ENCODE measurements at regions of chr20 and their contacts with region 1.

Region 1: GRCh38 chr20:49610701-49611538 is 43.0 kb upstream of the PTGIS start:
- DNase-seq: peak; percentile 87
- ATAC-seq: peak; percentile 82
- H3K4me3 ChIP-seq: peak overlapping the region; percentile 58 to 84 (median 63)
- H3K27ac ChIP-seq: no peak overlapping the region
- H3K4me1 ChIP-seq: peaks cover 67% of the 10 kb centered on the region
- H3K27me3 ChIP-seq: no peaks in the 10 kb centered on the region; a peak in 1 of 5 replicates
- CTCF ChIP-seq: peak; percentile 100
- EP300 ChIP-seq: peak; percentile 3 to 54; a peak in 1 of 4 replicates
- POLR2A ChIP-seq: no peak
- RAD21 ChIP-seq: peak; percentile 100

Region 2: DNA sequence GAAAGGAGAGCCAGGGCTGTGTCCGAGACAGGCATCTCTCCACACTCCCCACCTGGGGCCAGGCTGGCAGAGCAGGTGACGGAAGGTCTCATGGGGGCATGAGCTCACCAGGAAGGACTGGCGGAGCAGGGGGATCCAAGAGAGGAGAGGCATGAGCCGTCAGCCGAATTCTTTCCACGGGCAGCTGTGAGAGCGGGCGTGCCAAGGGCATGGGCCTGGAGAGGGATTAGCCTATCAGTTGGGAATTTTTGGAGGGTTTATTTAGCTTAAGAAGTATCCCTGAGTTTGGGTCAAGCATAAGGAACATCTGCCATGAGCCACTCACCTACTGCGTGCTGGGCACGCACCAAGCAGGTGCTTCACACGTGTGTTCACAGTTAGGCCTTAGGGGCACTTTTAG is 272.9 kb before region 1 on chr20:
- CTCF ChIA-PET with region 1: interaction called, 14 read pairs
- POLR2A ChIA-PET with region 1: no interaction called
- in situ Hi-C with region 1: loop called (anchors 5 kb)
- intact Hi-C with region 1: loop called (anchors 10 kb)
- DNase-seq: no peak
- ATAC-seq: no peak
- H3K4me3 ChIP-seq: no peak overlapping the region
- H3K27ac ChIP-seq: no peak overlapping the region
- H3K4me1 ChIP-seq: no peaks in the 10 kb centered on the region
- H3K27me3 ChIP-seq: peaks cover 1 to 25% of the 10 kb centered on the region in 2 experiments; a peak in 3 of 5 replicates
- CTCF ChIP-seq: no peak
- EP300 ChIP-seq: no peak
- POLR2A ChIP-seq: no peak
- RAD21 ChIP-seq: no peak

Region 3: GRCh38 chr20:49583669-49584417 is 27.1 kb before region 1 on chr20:
- CTCF ChIA-PET with region 1: interaction called, 15 read pairs
- POLR2A ChIA-PET with region 1: interaction called, 18 read pairs
- in situ Hi-C with region 1: no loop called
- intact Hi-C with region 1: no loop called
- DNase-seq: peak; percentile 97
- ATAC-seq: peak; percentile 95
- H3K4me3 ChIP-seq: peak overlapping the region in 2 of 3 experiments; percentile 29 to 59; a peak in 4 of 6 replicates
- H3K27ac ChIP-seq: peak overlapping the region; percentile 84
- H3K4me1 ChIP-seq: peaks cover 56% of the 10 kb centered on the region
- H3K27me3 ChIP-seq: peaks cover 0 to 4% of the 10 kb centered on the region in 2 experiments; a peak in 1 of 5 replicates
- CTCF ChIP-seq: peak; percentile 90
- EP300 ChIP-seq: peak; percentile 82 to 91
- POLR2A ChIP-seq: peak; percentile 80 to 94
- RAD21 ChIP-seq: peak; percentile 80

Region 4: GRCh38 chr20:49713753-49714712 is 103.1 kb after region 1 on chr20 and contains the start of gene B4GALT5:
- CTCF ChIA-PET with region 1: interaction called, 8 read pairs
- POLR2A ChIA-PET with region 1: interaction called, 4 read pairs
- in situ Hi-C with region 1: no loop called
- intact Hi-C with region 1: loop called (anchors 2 kb)
- DNase-seq: peak; percentile 66
- ATAC-seq: peak; percentile 80
- H3K4me3 ChIP-seq: peak within 1 kb of the TSS; percentile 87 to 97 (median 95)
- H3K27ac ChIP-seq: peak within 1 kb of the TSS; percentile 86
- H3K4me1 ChIP-seq: peaks cover 65% of the 10 kb centered on the region
- H3K27me3 ChIP-seq: no peaks in the 10 kb centered on the region; a peak in 1 of 5 replicates
- CTCF ChIP-seq: no peak
- EP300 ChIP-seq: no peak
- POLR2A ChIP-seq: peak; percentile 44 to 81; a peak in 3 of 4 replicates
- RAD21 ChIP-seq: peak; percentile 60
- total RNA-seq, gene B4GALT5: 26.7 and 30.9 TPM in 2 replicates

Region 5: DNA sequence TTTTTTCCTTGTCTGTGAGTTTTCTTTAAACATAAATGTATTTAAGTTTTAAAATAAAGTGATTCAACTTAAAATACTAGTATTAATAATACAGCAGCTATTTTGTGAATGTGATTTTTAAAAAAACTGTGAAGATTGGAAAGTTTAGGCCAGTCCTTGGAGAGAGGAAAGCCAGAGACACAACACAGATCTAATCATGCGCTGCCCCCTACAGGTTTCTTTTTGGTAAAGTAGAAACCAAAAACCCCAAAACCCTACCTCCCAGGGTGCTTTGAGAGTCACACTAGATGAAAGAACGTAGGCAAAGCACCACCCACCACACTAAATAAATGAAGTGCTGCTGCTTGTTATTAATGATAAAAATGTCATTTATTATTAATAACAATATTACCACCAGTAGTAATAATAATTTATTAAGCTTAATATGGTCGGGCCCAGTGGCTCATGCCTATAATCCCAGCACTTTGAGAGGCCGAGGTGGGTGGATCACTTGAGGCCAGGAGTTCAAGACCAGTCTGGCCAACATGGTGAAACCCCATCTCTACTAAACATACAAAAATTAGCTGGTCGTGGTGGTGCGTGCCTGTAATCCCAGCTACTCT is 235.4 kb after region 1 on chr20:
- CTCF ChIA-PET with region 1: interaction called, 134 read pairs
- POLR2A ChIA-PET with region 1: interaction called, 4 read pairs
- in situ Hi-C with region 1: loop called (anchors 5 kb)
- intact Hi-C with region 1: loop called (anchors 1 kb)
- DNase-seq: peak; percentile 73
- ATAC-seq: peak; percentile 94
- H3K4me3 ChIP-seq: no peak overlapping the region
- H3K27ac ChIP-seq: no peak overlapping the region
- H3K4me1 ChIP-seq: no peaks in the 10 kb centered on the region
- H3K27me3 ChIP-seq: no peaks in the 10 kb centered on the region
- CTCF ChIP-seq: peak; percentile 80
- EP300 ChIP-seq: no peak
- POLR2A ChIP-seq: no peak
- RAD21 ChIP-seq: peak; percentile 88

Region 6: DNA sequence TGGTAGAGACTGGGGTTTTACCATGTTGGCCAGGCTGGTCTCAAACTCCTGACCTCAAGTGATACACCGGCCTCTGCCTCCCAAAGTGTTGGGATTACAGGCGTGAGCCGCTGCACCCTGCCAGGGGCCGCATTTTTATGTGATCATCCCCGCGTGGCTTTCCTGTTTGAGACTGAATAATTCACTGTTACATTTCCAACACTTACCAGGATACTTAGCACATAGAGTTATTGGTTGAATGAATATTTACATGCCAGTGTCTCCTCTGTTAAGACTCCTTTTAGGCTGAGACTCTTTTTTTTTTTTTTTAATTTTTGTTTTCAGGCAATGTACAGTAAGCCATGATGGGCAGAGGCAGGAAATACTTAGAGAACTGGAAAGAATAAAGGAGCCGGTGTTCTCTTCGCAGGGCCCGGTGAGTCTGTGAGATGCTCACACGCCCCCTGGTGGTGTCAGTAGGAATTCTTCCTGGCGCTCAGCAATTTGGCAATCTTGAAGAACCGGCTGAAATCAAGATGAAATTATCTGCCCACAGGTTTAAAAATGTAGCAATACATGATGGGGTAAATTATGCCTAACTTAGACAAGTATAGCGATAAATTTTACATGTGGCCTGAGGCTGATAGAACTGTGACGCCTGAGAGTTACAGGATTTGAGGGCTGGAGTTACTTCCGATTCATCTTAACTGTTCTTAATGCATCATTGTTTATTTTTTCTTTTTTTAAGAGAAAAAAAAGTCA is 317.7 kb after region 1 on chr20:
- CTCF ChIA-PET with region 1: interaction called, 15 read pairs
- POLR2A ChIA-PET with region 1: no interaction called
- in situ Hi-C with region 1: no loop called
- intact Hi-C with region 1: loop called (anchors 1 kb)
- DNase-seq: peak; percentile 86
- ATAC-seq: peak; percentile 89
- H3K4me3 ChIP-seq: peak overlapping the region in 1 of 3 experiments; percentile 36; a peak in 2 of 6 replicates
- H3K27ac ChIP-seq: no peak overlapping the region
- H3K4me1 ChIP-seq: peaks cover 44% of the 10 kb centered on the region
- H3K27me3 ChIP-seq: no peaks in the 10 kb centered on the region
- CTCF ChIP-seq: peak; percentile 92
- EP300 ChIP-seq: peak in 1 of 2 experiments; percentile 56; a peak in 1 of 4 replicates
- POLR2A ChIP-seq: no peak
- RAD21 ChIP-seq: peak; percentile 94

Measured in HepG2 (cell line).